IMR-90 (cell line): ENCODE measurements at regions of chrX and their contacts with region 1.

Region 1: GRCh38 chrX:13428055-13428786 is 108.4 kb upstream of the ATXN3L start:
- DNase-seq: peak; percentile 72
- ATAC-seq: peak; percentile 56
- H3K4me3 ChIP-seq: no peak overlapping the region
- H3K27ac ChIP-seq: peak overlapping the region; percentile 7; the same call in 1 of the 2 replicates
- H3K4me1 ChIP-seq: peaks cover 9% of the 10 kb centered on the region
- H3K27me3 ChIP-seq: no peaks in the 10 kb centered on the region
- CTCF ChIP-seq: no peak
- POLR2A ChIP-seq: no peak
- RAD21 ChIP-seq: no peak

Region 2: DNA sequence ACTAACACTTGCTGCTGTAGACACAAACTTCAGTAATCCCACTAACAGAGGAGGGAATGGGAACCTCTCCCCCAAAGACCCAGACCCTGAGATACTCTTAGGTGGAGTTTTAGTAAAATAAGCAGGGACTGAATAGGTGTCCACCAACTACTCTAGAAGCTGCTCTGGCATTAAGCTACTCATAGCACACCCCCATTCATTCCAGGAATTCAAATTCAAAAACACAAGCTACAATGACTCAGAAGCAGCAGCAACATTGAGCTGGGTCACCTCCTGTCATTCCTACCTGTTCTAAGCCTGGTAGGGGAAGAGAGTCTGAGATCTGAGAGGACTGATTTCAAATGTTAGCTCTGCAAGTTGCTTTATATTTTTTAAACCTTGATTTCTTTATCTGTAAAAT is 1425.3 kb before region 1 on chrX:
- CTCF ChIA-PET with region 1: no interaction called
- POLR2A ChIA-PET with region 1: no interaction called
- dilution Hi-C with region 1: no loop called
- in situ Hi-C with region 1: no loop called
- intact Hi-C with region 1: loop called (anchors 5 kb)
- DNase-seq: peak; percentile 10
- ATAC-seq: peak; percentile 37; the same call in 1 of the 2 replicates
- H3K4me3 ChIP-seq: no peak overlapping the region
- H3K27ac ChIP-seq: no peak overlapping the region
- H3K4me1 ChIP-seq: no peaks in the 10 kb centered on the region
- H3K27me3 ChIP-seq: no peaks in the 10 kb centered on the region
- CTCF ChIP-seq: no peak
- POLR2A ChIP-seq: no peak
- RAD21 ChIP-seq: no peak

Region 3: GRCh38 chrX:13283950-13284914 is 144.0 kb before region 1 on chrX:
- CTCF ChIA-PET with region 1: no interaction called
- POLR2A ChIA-PET with region 1: no interaction called
- dilution Hi-C with region 1: no loop called
- in situ Hi-C with region 1: no loop called
- intact Hi-C with region 1: loop called (anchors 5 kb)
- DNase-seq: peak; percentile 78
- ATAC-seq: 0 out of 2 replicates have a peak, but pooled peaks have one; percentile 21
- H3K4me3 ChIP-seq: no peak overlapping the region
- H3K27ac ChIP-seq: peak overlapping the region; percentile 25; the same call in 1 of the 2 replicates
- H3K4me1 ChIP-seq: peaks cover 11% of the 10 kb centered on the region; the same call in 1 of the 2 replicates
- H3K27me3 ChIP-seq: no peaks in the 10 kb centered on the region
- CTCF ChIP-seq: no peak
- POLR2A ChIP-seq: no peak
- RAD21 ChIP-seq: no peak

Region 4: DNA sequence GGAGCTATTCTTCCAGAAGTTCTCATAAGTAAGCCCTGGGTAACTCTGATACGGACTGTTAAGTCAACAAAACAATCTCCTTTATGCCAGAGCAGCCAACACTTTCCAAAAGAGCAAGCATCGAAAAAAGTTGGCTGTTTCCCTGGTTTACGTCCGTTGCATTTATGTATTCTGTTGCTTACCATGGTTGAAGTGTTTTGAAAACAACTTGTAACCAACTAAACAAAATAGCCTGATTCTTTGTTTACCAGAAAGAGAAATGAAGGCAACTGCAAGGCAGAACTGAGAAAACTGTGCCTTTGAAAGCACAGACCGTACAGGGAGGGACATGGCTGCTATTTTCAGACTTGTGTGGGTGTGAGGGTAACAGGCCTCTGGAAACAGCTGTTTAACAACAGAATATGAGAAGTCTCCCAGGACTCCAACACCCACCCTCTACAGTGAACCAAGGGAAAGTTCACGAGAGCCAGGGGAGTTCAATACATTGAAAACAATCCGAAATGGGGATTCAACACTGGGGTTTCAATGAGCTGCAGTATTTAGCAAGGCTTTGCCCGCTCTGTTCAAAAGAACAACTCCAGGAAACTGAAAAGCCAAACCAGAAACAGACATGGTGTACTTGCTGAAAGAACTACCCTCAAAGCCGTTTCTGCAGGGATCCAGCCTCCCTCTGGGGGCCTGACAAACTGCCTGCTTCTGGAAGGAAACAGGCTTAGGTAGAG is 45.4 kb after region 1 on chrX:
- CTCF ChIA-PET with region 1: interaction called, 3 read pairs
- POLR2A ChIA-PET with region 1: no interaction called
- dilution Hi-C with region 1: no loop called
- in situ Hi-C with region 1: no loop called
- intact Hi-C with region 1: loop called (anchors 5 kb)
- DNase-seq: peak; percentile 40
- ATAC-seq: peak; percentile 42; the same call in 1 of the 2 replicates
- H3K4me3 ChIP-seq: no peak overlapping the region
- H3K27ac ChIP-seq: peak overlapping the region; percentile 4; the same call in 1 of the 2 replicates
- H3K4me1 ChIP-seq: peaks cover 7% of the 10 kb centered on the region
- H3K27me3 ChIP-seq: no peaks in the 10 kb centered on the region
- CTCF ChIP-seq: no peak
- POLR2A ChIP-seq: no peak
- RAD21 ChIP-seq: no peak